ENCODE measurements at regions of chr13 and their contacts with region 1.

Region 1: GRCh38 chr13:30132623-30133553 is 174.5 kb downstream of the KATNAL1 start:
- DNase-seq: peak; percentile 99
- H3K4me3 Mint-ChIP-seq: no peak overlapping the region
- H3K27ac Mint-ChIP-seq: no peak overlapping the region
- H3K4me1 Mint-ChIP-seq: peaks cover 7% of the 10 kb centered on the region
- H3K27me3 Mint-ChIP-seq: no peaks in the 10 kb centered on the region

Region 2: DNA sequence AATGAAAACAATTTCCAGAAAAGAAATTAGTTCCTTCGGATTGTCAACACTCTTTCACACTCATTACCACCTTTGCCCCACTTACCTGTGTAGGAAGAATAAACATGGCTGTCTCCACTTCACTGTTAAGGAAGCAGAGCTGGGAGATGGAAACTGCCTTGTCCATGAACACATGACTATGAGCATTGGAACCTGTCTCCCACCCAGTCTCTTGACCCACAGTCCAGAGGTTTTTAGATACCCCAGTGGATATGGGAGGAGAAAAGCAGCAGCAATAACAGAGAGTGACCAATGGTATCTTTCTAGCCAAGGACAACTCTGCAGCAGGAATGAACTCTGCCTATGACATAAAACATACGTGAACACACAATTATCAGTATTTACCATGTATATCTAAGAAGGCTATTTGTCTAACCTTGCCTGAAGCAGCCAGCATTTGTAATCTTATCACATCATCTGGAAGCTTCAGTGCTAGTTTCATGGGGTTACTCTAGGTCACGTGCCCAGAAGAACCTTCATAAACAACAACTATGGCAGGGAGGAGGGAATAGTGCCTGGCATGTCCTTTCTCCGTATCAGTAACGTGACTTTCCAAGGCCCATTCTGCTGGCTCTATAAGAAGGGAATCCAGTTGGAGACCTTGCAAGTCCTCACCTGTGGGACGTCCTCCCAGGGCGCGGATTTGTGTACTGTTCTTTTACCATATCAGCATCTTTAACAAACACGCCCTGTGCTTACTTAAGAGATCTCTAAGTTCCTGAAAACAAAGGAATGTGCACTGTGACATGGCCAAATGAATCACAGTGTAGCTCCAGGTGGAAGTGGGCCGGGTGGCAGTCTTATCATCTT is 60.7 kb before region 1 on chr13:
- CTCF ChIA-PET with region 1: no interaction called
- intact Hi-C with region 1: no loop called
- DNase-seq: no peak
- H3K4me3 Mint-ChIP-seq: no peak overlapping the region
- H3K27ac Mint-ChIP-seq: no peak overlapping the region
- H3K4me1 Mint-ChIP-seq: no peaks in the 10 kb centered on the region
- H3K27me3 Mint-ChIP-seq: no peaks in the 10 kb centered on the region

Region 3: GRCh38 chr13:30158774-30159445 is 26.0 kb after region 1 on chr13:
- CTCF ChIA-PET with region 1: interaction called, 96 read pairs
- intact Hi-C with region 1: loop called (anchors 1 kb)
- DNase-seq: no peak
- H3K4me3 Mint-ChIP-seq: no peak overlapping the region
- H3K27ac Mint-ChIP-seq: no peak overlapping the region
- H3K4me1 Mint-ChIP-seq: peaks cover 25% of the 10 kb centered on the region
- H3K27me3 Mint-ChIP-seq: no peaks in the 10 kb centered on the region

Region 4: GRCh38 chr13:30241532-30241931 is 108.6 kb after region 1 on chr13:
- CTCF ChIA-PET with region 1: no interaction called
- intact Hi-C with region 1: no loop called
- DNase-seq: no peak
- H3K4me3 Mint-ChIP-seq: no peak overlapping the region
- H3K27ac Mint-ChIP-seq: no peak overlapping the region
- H3K4me1 Mint-ChIP-seq: no peaks in the 10 kb centered on the region
- H3K27me3 Mint-ChIP-seq: no peaks in the 10 kb centered on the region

Region 5: GRCh38 chr13:30255696-30256095 is 122.8 kb after region 1 on chr13:
- CTCF ChIA-PET with region 1: interaction called, 10 read pairs
- intact Hi-C with region 1: no loop called
- DNase-seq: no peak
- H3K4me3 Mint-ChIP-seq: no peak overlapping the region
- H3K27ac Mint-ChIP-seq: no peak overlapping the region
- H3K4me1 Mint-ChIP-seq: peaks cover 20% of the 10 kb centered on the region
- H3K27me3 Mint-ChIP-seq: no peaks in the 10 kb centered on the region

Region 6: GRCh38 chr13:30408319-30409101 is 275.6 kb after region 1 on chr13:
- CTCF ChIA-PET with region 1: interaction called, 5 read pairs
- intact Hi-C with region 1: loop called (anchors 5 kb)
- DNase-seq: peak; percentile 96
- H3K4me3 Mint-ChIP-seq: peak overlapping the region; percentile 49
- H3K27ac Mint-ChIP-seq: no peak overlapping the region
- H3K4me1 Mint-ChIP-seq: peaks cover 10% of the 10 kb centered on the region
- H3K27me3 Mint-ChIP-seq: no peaks in the 10 kb centered on the region

Region 7: DNA sequence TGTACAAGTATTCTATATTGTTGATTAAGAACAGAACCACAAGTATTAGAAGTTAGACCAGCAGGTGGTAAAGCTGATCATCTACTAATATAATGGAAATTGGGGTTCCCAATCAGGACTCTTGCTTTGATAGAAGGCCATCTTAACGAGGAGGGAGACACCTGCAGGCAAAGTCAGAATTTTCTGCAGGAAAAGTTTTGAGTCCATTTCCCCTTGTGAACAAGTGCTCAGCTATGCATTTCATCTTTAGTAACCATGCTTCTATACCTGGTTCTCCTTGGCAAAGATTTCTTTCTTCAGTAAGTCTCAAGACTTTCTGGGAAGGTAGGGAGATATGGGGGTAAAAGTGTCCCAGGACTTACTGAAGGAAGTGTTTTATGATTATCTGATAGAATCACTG is 448.7 kb after region 1 on chr13:
- CTCF ChIA-PET with region 1: interaction called, 8 read pairs
- intact Hi-C with region 1: loop called (anchors 1 kb)
- DNase-seq: peak; percentile 26
- H3K4me3 Mint-ChIP-seq: no peak overlapping the region
- H3K27ac Mint-ChIP-seq: no peak overlapping the region
- H3K4me1 Mint-ChIP-seq: peaks cover 9% of the 10 kb centered on the region
- H3K27me3 Mint-ChIP-seq: no peaks in the 10 kb centered on the region

Region 8: GRCh38 chr13:31044377-31045285 is 911.7 kb after region 1 on chr13:
- CTCF ChIA-PET with region 1: interaction called, 3 read pairs
- intact Hi-C with region 1: loop called (anchors 2 kb)
- DNase-seq: peak; percentile 93
- H3K4me3 Mint-ChIP-seq: no peak overlapping the region
- H3K27ac Mint-ChIP-seq: peak overlapping the region; percentile 78
- H3K4me1 Mint-ChIP-seq: peaks cover 43% of the 10 kb centered on the region
- H3K27me3 Mint-ChIP-seq: peaks cover 2% of the 10 kb centered on the region